Lower leg skin (tissue), 4 donors: ENCODE measurements at regions of chr1 and their contacts with region 1.

Region 1: DNA sequence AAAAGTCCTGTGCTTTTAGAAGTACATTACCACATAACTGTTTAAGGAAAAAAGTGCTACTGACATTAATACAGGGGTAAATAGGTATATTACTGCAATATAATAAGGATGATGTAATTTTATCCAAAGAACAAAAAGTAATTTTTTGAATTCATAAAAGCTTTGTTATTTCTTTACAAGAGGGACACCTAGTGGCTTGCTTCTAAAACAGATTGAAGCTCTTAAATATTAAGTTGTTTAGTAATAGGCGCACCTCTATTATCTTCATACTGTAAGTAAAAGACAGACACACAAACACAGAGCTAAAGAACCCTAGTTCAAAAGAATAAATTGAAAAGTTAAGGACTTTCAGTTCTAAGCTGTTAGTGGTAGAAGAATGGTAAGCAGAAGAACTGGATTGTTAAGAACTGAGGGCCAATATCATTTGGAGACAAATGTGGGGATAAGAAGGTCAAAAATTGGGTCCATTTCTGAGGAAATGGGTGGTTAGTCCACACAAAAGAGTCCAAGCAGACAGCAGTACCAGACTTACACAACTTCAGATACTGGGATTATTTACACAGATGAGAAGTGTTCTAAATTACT is 15.4 kb downstream of the ZNHIT6 start:
- DNase-seq: no peak
- H3K4me3 ChIP-seq: no peak overlapping the region
- CTCF ChIP-seq: no peak
- POLR2A ChIP-seq: no peak

Region 2: DNA sequence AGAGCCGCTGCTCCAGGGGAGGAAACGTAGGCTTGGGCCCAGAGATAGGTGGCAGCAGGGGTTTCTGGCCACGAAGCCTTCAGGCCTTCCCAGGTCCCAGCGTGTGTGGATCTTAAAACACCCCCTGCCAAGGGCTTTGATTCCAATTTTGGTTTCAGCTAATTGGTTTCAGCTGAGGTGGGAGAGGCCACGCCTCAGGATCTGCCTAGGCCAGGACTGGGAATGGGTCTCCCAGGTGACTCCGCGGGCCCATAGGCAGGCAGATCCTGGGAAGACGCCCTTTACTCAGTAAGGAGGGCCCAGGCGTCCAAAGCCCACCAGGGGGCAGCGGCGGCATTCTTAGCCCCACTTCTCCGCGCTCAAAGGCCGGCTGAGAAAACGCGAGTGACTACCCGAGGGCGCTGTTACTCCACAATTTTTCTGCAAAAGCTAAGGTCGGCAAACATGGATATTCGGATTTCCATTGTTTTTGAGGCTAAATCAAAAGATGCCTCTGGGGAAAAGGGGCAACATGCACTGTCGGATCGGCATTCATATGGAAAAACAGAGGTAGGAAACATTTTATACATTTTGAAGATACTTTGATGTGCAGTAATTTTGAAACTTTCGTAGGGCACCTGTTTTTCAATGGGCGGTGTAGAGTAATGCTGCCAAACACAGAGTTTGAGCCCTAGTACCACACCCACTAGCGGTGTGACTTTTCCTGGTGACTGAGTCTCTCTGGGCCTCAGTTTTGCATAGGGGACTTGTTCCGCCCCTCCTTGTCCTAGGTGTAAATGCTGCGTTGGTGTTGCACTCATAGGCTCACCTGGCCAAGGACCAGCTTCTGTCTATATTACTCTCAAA is 384.6 kb before region 1 on chr1:
- intact Hi-C with region 1: loop called (anchors 5 kb)
- DNase-seq: peak; percentile 78 to 98
- H3K4me3 ChIP-seq: no peak overlapping the region
- CTCF ChIP-seq: peak in 1 of 3 donors; percentile 87
- POLR2A ChIP-seq: no peak